PC-9 (cell line): ENCODE measurements at regions of chr17 and their contacts with region 1.

Region 1: DNA sequence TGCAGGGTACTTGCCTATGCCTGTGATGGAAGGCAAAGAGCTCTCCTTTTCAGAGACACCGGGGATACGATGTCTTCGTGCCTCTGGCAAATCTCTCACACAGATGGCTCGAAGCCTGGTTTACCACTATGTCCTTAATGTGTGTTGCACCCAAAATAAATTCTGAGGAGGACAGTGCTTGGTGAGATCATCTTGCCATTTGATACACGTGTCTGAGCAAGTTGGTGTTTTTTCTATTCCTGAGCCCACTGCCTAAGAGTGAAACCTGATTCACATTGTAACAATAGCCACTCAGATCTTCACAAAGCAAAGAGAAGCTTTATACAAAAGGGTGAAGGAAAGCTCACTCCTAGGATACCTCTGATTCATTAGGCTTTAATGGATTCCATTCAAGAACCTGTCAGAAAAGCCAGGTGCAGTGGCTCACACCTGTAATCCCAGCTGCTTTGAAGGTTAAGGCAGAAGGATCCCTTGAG is 33.1 kb upstream of the AKAP1 start:
- DNase-seq: no peak
- H3K4me3 ChIP-seq: no peak overlapping the region
- H3K27ac ChIP-seq: no peak overlapping the region
- H3K4me1 ChIP-seq: peaks cover 8% of the 10 kb centered on the region; the same call in 1 of the 2 replicates
- H3K27me3 ChIP-seq: no peaks in the 10 kb centered on the region
- CTCF ChIP-seq: no peak

Region 2: GRCh38 chr17:56960596-56961538 is 91.1 kb before region 1 on chr17 and contains the start of gene COIL:
- CTCF ChIA-PET with region 1: no interaction called
- POLR2A ChIA-PET with region 1: no interaction called
- intact Hi-C with region 1: loop called (anchors 1 kb)
- DNase-seq: peak; percentile 80 to 88
- H3K4me3 ChIP-seq: peak within 1 kb of the TSS; percentile 81
- H3K27ac ChIP-seq: peak within 1 kb of the TSS; percentile 77
- H3K4me1 ChIP-seq: peaks cover 15% of the 10 kb centered on the region
- H3K27me3 ChIP-seq: no peaks in the 10 kb centered on the region
- CTCF ChIP-seq: peak; percentile 100
- total RNA-seq, gene COIL: 14.0 and 19.0 TPM in 2 replicates

Region 3: GRCh38 chr17:57009737-57010445 is 42.0 kb before region 1 on chr17:
- CTCF ChIA-PET with region 1: no interaction called
- POLR2A ChIA-PET with region 1: no interaction called
- intact Hi-C with region 1: no loop called
- DNase-seq: peak; percentile 28 to 45
- H3K4me3 ChIP-seq: no peak overlapping the region
- H3K27ac ChIP-seq: no peak overlapping the region
- H3K4me1 ChIP-seq: no peaks in the 10 kb centered on the region
- H3K27me3 ChIP-seq: no peaks in the 10 kb centered on the region
- CTCF ChIP-seq: peak; percentile 85